ENCODE measurements at regions of chr11 and their contacts with region 1.

Region 1: DNA sequence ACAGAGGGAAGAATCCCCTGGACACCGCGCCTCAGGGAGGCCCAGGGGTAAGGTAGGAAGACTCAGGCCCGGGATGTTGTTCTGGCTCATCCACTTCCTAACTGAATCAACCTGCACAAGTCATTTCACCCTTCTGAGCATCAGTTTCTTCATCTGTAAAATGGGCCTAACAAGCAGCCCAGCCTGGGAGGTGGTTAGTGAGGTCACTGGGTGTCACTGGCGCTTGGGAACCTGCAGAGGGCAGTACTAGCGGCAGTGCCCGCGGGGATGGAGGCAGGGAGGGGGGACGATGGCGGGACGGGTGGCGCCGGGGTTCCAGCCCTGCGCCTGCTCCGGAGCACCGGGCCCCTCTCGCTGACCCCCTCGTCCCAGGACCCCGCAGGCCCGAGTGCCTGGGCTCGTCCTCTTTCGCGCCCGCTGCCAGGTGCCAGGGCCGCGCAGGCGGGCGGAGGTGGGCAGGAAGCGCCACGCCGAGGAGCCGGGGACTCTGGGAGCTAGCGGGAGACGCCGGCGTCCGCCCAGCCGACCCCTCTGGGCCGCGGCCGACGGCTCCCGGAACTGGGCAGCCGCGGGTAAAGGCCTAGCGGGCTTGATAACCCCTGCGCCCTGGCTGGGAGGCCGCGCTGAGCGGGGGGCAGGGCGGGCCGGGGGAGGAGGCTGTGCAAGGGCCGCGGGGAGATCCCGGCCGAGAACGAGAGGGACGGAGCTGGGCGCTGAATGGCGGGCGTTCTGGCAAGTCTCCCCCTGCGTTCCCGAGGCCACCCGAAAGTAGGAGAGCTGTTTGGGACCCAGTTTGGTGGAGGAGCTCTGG is at the start of gene NLRX1:
- DNase-seq: peak; percentile 81 to 83 (median 82)
- H3K4me3 ChIP-seq: peak within 1 kb of the TSS; percentile 78 to 79
- H3K4me3 Mint-ChIP-seq: peak within 1 kb of the TSS; percentile 89 to 91 (median 90)
- H3K27ac ChIP-seq: peak within 1 kb of the TSS; percentile 67
- H3K27ac Mint-ChIP-seq: peak within 1 kb of the TSS; percentile 68 to 90 (median 89)
- H3K4me1 ChIP-seq: peaks cover 6% of the 10 kb centered on the region
- H3K4me1 Mint-ChIP-seq: peaks cover 1 to 10% (median 8%) of the 10 kb centered on the region in 4 donors
- H3K27me3 ChIP-seq: no peaks in the 10 kb centered on the region
- H3K27me3 Mint-ChIP-seq: no peaks in the 10 kb centered on the region
- total RNA-seq, gene NLRX1: 8.8 to 9.2 TPM

Region 2: DNA sequence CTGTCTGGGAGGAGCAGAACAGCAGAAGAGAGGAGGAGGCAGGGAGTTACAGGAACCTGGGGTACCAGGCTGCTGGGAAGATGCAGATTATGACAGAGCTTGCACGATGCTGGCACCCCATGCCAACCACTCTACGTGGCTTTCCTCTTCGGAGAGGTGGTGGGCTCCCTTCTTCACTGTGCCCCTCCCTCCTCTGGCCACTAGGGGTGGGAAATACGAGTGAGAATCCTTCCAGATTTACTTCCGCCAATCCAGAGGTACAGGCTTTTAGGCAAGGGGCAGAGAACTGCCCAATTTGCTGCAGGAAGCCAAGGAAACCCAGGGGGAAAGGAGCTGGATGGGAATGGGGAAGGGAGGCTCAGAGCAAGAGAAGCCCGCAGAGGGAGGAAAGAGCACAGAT is 124.0 kb before region 1 on chr11:
- CTCF ChIA-PET with region 1: no interaction called
- POLR2A ChIA-PET with region 1: no interaction called
- intact Hi-C with region 1: no loop called
- DNase-seq: no peak
- H3K4me3 ChIP-seq: no peak overlapping the region
- H3K4me3 Mint-ChIP-seq: no peak overlapping the region
- H3K27ac ChIP-seq: no peak overlapping the region
- H3K27ac Mint-ChIP-seq: peak overlapping the region in 2 of 7 donors; percentile 36 to 86
- H3K4me1 ChIP-seq: no peaks in the 10 kb centered on the region
- H3K4me1 Mint-ChIP-seq: peaks cover 0 to 5% (median 2%) of the 10 kb centered on the region in 4 donors
- H3K27me3 ChIP-seq: no peaks in the 10 kb centered on the region
- H3K27me3 Mint-ChIP-seq: peaks cover 0 to 2% of the 10 kb centered on the region in 2 donors

Region 3: GRCh38 chr11:119179989-119180388 is 11.3 kb after region 1 on chr11:
- CTCF ChIA-PET with region 1: interaction called, 15 read pairs
- POLR2A ChIA-PET with region 1: interaction called, 6 read pairs
- intact Hi-C with region 1: no loop called
- DNase-seq: no peak
- H3K4me3 ChIP-seq: no peak overlapping the region
- H3K4me3 Mint-ChIP-seq: no peak overlapping the region
- H3K27ac ChIP-seq: no peak overlapping the region
- H3K27ac Mint-ChIP-seq: no peak overlapping the region
- H3K4me1 ChIP-seq: peaks cover 11% of the 10 kb centered on the region
- H3K4me1 Mint-ChIP-seq: peaks cover 3 to 15% (median 4%) of the 10 kb centered on the region in 4 donors
- H3K27me3 ChIP-seq: no peaks in the 10 kb centered on the region
- H3K27me3 Mint-ChIP-seq: no peaks in the 10 kb centered on the region

Region 4: GRCh38 chr11:119315131-119316015 is 146.7 kb after region 1 on chr11:
- CTCF ChIA-PET with region 1: interaction called, 10 read pairs
- POLR2A ChIA-PET with region 1: no interaction called
- intact Hi-C with region 1: no loop called
- DNase-seq: peak; percentile 44 to 69 (median 56)
- H3K4me3 ChIP-seq: peak overlapping the region; percentile 46 to 49
- H3K4me3 Mint-ChIP-seq: peak overlapping the region; percentile 67 to 82 (median 75)
- H3K27ac ChIP-seq: no peak overlapping the region
- H3K27ac Mint-ChIP-seq: peak overlapping the region in 4 of 7 donors; percentile 15 to 70 (median 58)
- H3K4me1 ChIP-seq: peaks cover 46% of the 10 kb centered on the region
- H3K4me1 Mint-ChIP-seq: peaks cover 11 to 42% (median 24%) of the 10 kb centered on the region in 4 donors
- H3K27me3 ChIP-seq: peaks cover 10% of the 10 kb centered on the region
- H3K27me3 Mint-ChIP-seq: peaks cover 1 to 16% of the 10 kb centered on the region in 2 donors